Esophagus squamous epithelium (tissue), 5 donors: ENCODE measurements at regions of chr9 and their contacts with region 1.

Region 1: DNA sequence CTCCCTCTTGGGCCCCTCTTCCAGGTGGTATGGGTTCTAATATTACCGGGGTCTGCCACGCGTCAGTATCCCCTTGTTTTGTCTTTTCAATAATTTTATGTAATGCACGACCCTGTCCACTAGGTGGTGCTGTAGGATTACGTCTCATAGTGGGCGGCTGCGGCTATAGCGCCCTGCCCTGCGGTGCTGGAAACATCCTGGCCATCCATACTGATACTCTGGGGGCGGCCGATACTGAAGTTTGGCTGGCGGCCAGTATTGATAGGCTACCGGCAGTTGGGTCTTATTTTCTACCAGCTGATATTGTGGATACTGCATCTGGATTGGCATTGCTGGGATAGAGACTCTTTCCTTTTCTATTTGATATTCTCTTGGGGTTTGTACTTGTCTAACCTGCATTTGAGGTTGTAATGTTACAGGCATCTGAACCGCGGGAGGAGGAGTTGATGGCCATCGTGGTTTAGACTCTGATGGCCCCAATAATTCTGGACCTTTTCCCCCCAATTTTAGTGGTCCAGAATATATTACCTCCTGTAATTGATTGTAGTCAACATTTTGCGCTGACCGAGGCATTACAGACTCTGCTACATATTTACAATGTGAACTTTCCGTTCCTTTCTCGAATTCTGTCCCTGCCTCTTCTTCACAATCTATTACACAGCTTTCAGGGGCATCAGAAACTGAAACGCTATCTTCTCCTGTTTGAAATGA is 3.3 kb upstream of the TMEM141 start:
- DNase-seq: no peak
- H3K4me3 ChIP-seq: no peak overlapping the region
- H3K27ac ChIP-seq: no peak overlapping the region
- H3K4me1 ChIP-seq: peaks cover 11 to 34% (median 17%) of the 10 kb centered on the region in 3 donors
- H3K27me3 ChIP-seq: no peaks in the 10 kb centered on the region
- CTCF ChIP-seq: peak; percentile 78 to 88 (median 84)
- POLR2A ChIP-seq: no peak

Region 2: GRCh38 chr9:137034863-137035761 is 247.3 kb after region 1 on chr9:
- intact Hi-C with region 1: loop called (anchors 5 kb)
- DNase-seq: no peak
- H3K4me3 ChIP-seq: peak overlapping the region in 2 of 4 donors; percentile 5 to 26
- H3K27ac ChIP-seq: peak overlapping the region in 2 of 4 donors; percentile 54 to 64
- H3K4me1 ChIP-seq: peaks cover 14 to 34% (median 23%) of the 10 kb centered on the region in 3 donors
- H3K27me3 ChIP-seq: peaks cover 0 to 11% (median 0%) of the 10 kb centered on the region in 4 donors
- CTCF ChIP-seq: peak; percentile 84 to 93 (median 91)
- POLR2A ChIP-seq: no peak

Region 3: DNA sequence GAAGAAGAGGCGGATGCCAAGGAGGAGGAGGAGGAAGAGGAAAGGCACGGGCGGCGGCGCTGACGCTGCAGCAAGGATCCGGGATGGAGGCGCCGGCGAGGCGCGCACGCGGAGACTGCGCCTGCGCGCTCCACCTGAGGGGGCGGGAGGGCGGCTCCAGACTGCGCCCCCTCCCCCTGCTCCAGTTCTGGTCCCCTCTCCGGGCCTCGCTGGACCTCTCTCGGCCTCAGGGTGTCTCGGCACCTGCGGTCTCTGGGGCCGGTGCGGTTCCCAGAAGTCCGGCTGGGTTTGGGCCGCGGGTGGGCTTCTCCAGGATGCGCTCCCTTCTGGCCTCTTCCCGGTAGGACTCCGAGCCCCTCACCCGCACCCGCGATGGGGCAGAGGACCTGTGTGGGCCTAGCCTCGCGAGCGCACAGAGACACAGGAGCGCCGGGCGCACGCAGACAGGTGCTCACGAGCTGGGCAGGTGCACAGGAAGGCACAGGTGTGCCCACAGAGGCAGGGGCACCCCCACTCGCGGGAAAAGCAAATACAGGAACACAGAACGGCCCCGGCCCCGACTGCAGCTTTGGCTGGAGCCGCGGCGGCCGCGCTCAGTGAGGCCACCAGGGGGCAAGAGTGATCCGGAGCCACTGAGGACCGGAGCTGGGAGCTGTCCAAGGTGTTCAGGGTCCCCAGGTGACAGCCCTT is 258.4 kb after region 1 on chr9 and contains the start of gene NPDC1:
- intact Hi-C with region 1: loop called (anchors 5 kb)
- DNase-seq: no peak
- H3K4me3 ChIP-seq: peak within 1 kb of the TSS; percentile 35 to 76 (median 54)
- H3K27ac ChIP-seq: peak within 1 kb of the TSS; percentile 52 to 86 (median 66)
- H3K4me1 ChIP-seq: peaks cover 24 to 58% (median 33%) of the 10 kb centered on the region in 3 donors
- H3K27me3 ChIP-seq: peaks cover 0 to 80% (median 21%) of the 10 kb centered on the region in 4 donors
- CTCF ChIP-seq: peak; percentile 57 to 91 (median 83)
- POLR2A ChIP-seq: peak in 2 of 4 donors; percentile 17 to 22
- total RNA-seq, gene NPDC1: 11.9 to 45.2 (median 20.3) TPM

Region 4: DNA sequence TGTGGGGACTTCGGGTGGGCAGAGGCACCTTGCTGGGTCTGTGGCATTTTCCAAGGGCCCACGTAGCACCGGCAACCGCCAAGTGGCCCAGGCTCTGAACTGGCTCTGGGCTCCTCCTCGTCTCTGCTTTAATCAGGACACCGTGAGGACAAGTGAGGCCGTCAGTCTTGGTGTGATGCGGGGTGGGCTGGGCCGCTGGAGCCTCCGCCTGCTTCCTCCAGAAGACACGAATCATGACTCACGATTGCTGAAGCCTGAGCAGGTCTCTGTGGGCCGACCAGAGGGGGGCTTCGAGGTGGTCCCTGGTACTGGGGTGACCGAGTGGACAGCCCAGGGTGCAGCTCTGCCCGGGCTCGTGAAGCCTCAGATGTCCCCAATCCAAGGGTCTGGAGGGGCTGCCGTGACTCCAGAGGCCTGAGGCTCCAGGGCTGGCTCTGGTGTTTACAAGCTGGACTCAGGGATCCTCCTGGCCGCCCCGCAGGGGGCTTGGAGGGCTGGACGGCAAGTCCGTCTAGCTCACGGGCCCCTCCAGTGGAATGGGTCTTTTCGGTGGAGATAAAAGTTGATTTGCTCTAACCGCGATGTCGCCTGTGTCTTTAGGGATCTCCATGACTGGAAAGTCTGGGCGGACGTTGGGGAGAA is 320.9 kb after region 1 on chr9:
- intact Hi-C with region 1: no loop called
- DNase-seq: no peak
- H3K4me3 ChIP-seq: no peak overlapping the region
- H3K27ac ChIP-seq: no peak overlapping the region
- H3K4me1 ChIP-seq: peaks cover 6 to 11% (median 6%) of the 10 kb centered on the region in 3 donors
- H3K27me3 ChIP-seq: no peaks in the 10 kb centered on the region
- CTCF ChIP-seq: no peak
- POLR2A ChIP-seq: no peak